Activated T-helper 2 cell treated with anti-CD3 and anti-CD28 coated beads, Interferon-gamma antibody, Interleukin-2, Interleukin-4, amounts not matched to agents 10 μg/mL and 5 μg/mL and 100 μg/mL, durations not matched to agents 14 hours and 24 hours and 36 hours (primary cell): ENCODE measurements at regions of chr17 and their contacts with region 1.

Region 1: DNA sequence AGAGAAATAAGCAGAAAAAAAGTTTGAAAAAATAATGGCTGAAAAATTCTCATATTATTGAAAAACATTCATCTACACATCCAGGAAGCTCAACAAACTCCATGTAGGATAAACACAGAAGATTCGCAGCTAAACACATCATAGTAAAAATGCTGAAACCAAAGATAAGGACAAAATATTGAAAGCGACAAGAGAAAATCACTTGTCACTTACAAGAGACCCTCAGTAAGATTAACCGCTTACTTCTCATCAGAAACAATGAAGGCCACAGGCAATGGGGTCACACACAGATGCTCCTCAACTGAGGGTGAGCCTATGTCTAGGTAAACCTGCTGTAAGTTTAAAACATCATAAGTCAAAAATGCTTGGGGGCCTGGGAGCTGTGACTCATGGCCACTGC is 38.1 kb upstream of the METRNL start:
- DNase-seq: no peak
- H3K4me3 Mint-ChIP-seq: no peak overlapping the region
- H3K27ac Mint-ChIP-seq: no peak overlapping the region
- H3K4me1 Mint-ChIP-seq: peaks cover 9% of the 10 kb centered on the region
- H3K27me3 Mint-ChIP-seq: no peaks in the 10 kb centered on the region

Region 2: GRCh38 chr17:82985973-82986372 is 55.3 kb before region 1 on chr17:
- intact Hi-C with region 1: loop called (anchors 10 kb)
- DNase-seq: peak; percentile 66
- H3K4me3 Mint-ChIP-seq: peak overlapping the region; percentile 57
- H3K27ac Mint-ChIP-seq: peak overlapping the region; percentile 59
- H3K4me1 Mint-ChIP-seq: peaks cover 36% of the 10 kb centered on the region
- H3K27me3 Mint-ChIP-seq: no peaks in the 10 kb centered on the region